AG04450 (cell line): ENCODE measurements at regions of chr4 and their contacts with region 1.

Region 1: DNA sequence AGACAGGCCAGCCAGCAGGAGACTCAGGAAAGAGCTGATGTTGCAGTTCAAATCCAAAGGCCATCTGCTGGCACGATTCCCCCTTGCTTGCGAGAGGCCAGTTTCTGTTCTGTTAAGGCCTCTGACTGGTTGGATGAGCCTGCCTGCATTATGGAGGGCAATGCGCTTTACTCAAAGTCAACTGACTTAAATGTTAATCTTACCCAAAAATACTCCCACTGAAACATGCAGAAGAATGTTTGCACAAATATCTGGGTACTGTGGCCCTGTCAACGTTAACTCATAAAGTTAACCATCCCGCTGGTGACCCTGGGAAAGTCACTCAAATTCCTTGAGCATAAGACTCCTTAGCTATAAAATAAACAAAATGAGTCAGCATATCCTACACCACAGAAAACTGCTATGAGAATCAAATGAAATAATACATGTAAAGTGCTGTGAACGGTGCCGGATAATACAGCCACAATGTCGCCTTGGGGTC is 326.4 kb downstream of the EVC2 start:
- DNase-seq: peak; percentile 61
- H3K4me3 ChIP-seq: no peak overlapping the region
- H3K27ac ChIP-seq: peak overlapping the region; percentile 88
- H3K27me3 ChIP-seq: no peaks in the 10 kb centered on the region
- CTCF ChIP-seq: no peak

Region 2: GRCh38 chr4:5399790-5400421 is 17.9 kb after region 1 on chr4:
- CTCF ChIA-PET with region 1: interaction called, 19 read pairs
- POLR2A ChIA-PET with region 1: no interaction called
- DNase-seq: peak; percentile 8
- H3K4me3 ChIP-seq: no peak overlapping the region
- H3K27ac ChIP-seq: no peak overlapping the region
- H3K27me3 ChIP-seq: no peaks in the 10 kb centered on the region
- CTCF ChIP-seq: peak; percentile 84